Activated naive CD4-positive, alpha-beta T cell treated with anti-CD3 and anti-CD28 coated beads for 36 hours (primary cell): ENCODE measurements at regions of chr21 and their contacts with region 1.

Region 1: DNA sequence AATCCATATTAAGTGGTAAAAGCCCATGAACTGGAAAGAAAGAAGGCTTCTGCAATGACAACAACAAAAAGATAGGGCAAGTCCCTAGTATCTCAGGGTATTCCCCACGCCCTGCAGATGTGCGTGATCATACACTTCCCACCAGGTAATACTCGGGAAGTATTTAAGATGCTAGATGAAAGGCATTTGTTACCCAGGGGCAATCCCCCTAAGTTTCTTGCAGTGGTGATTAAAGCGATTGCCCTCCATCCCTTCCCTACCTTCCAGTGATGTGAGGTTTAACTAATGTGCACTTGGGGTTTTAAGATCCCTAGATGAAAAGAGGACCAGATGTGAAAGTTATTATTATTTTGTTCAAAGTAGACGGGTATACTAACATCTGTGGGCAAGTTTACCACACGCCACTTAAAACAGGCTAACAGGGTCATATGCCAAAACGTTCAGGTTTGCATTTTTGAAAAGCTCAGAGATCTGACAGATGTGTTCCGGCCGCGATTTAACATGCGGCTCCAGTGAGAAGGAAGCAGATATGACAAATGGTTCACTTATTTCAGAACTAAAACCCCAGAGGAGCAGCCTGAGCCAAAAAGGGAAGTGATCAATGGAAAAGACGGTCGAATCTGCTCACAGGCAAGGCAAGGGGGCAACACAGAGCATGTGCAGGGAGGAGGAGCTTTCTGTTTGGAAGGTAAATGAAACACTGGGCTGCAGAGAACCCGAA is 17.4 kb downstream of the TIAM1 start:
- DNase-seq: peak; percentile 83
- H3K4me3 Mint-ChIP-seq: peak overlapping the region; percentile 45
- H3K27ac Mint-ChIP-seq: peak overlapping the region; percentile 92
- H3K4me1 Mint-ChIP-seq: peaks cover 37% of the 10 kb centered on the region
- H3K27me3 Mint-ChIP-seq: no peaks in the 10 kb centered on the region

Region 2: DNA sequence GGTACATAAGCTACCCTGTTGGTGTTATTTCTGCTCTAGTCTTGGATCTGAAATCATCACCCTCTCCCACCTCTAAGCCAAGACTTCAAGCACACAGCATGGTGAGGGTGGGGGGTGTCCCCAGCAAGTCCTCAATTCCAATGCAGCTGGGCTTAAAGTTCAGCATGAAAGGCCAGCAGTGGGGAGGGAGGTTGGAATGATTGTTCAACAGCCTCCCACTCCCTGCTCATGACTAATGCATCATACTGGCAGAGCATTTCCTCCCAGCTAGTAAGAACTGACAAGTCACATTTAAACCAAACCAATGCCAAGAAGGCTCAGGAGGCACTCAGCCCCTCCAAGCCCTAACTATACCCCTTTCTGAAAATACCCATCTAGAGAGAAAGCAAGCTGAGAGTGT is 32.7 kb before region 1 on chr21:
- CTCF ChIA-PET with region 1: no interaction called
- intact Hi-C with region 1: loop called (anchors 1 kb)
- DNase-seq: peak; percentile 88
- H3K4me3 Mint-ChIP-seq: no peak overlapping the region
- H3K27ac Mint-ChIP-seq: peak overlapping the region; percentile 84
- H3K4me1 Mint-ChIP-seq: peaks cover 44% of the 10 kb centered on the region
- H3K27me3 Mint-ChIP-seq: no peaks in the 10 kb centered on the region

Region 3: GRCh38 chr21:31397515-31397926 is 70.8 kb after region 1 on chr21:
- CTCF ChIA-PET with region 1: no interaction called
- intact Hi-C with region 1: loop called (anchors 1 kb)
- DNase-seq: no peak
- H3K4me3 Mint-ChIP-seq: no peak overlapping the region
- H3K27ac Mint-ChIP-seq: no peak overlapping the region
- H3K4me1 Mint-ChIP-seq: peaks cover 46% of the 10 kb centered on the region
- H3K27me3 Mint-ChIP-seq: no peaks in the 10 kb centered on the region